Sciatic nerve (tissue), 2 donors: ENCODE measurements at regions of chrX and their contacts with region 1.

Region 1: DNA sequence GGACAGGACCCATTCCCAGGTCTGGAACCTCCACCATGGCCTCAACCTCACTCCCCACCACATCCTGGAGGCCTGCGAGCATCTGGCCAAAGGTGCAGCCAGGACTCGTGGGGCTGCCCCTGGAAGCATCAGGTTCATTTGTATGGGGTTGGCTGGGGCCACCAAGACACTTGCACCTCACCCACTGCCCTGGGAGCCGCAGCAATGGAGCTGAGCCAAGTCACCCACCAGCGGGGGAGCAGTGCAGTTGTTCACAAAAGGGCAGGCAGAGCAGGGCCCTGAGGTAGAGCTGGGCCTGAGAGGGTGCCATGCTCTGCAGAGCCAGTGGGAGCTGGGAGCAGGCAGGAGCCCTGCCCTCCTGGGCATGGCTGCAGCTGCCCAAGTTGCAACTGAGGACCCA is 163.5 kb downstream of the FAM47A start:
- DNase-seq: no peak
- ATAC-seq: no peak

Region 2: DNA sequence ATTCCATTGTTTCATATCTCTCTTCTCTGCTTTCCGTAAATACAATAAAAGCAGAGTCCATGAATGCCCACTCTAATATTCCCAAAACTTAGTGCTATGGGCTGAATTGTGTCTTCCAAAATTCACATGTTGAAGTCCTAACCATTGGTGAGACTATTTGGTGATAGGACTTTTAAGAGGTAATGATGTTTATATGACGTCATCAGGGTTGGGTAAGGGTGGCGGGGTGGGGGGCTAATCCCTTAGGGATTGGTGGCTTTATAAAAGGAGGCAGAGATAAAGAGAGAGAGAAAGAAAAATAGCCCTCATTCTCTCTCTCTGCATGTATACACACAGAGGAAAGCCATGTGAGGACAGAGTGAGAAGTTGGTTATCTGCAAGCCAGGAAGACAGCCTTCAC is 1479.5 kb before region 1 on chrX:
- intact Hi-C with region 1: loop called (anchors 5 kb)
- DNase-seq: no peak
- ATAC-seq: no peak